ENCODE measurements at regions of chr15 and their contacts with region 1.

Region 1: GRCh38 chr15:62742409-62743171 is 300.0 kb upstream of the TPM1 start:
- DNase-seq: peak; percentile 71
- H3K27ac ChIP-seq: peak overlapping the region; percentile 80
- CTCF ChIP-seq: peak; percentile 97

Region 2: GRCh38 chr15:62758126-62758951 is 15.7 kb after region 1 on chr15:
- CTCF ChIA-PET with region 1: interaction called, 21 read pairs
- POLR2A ChIA-PET with region 1: no interaction called
- DNase-seq: peak; percentile 82
- H3K27ac ChIP-seq: peak overlapping the region; percentile 81
- CTCF ChIP-seq: no peak

Region 3: GRCh38 chr15:62779036-62779775 is 36.6 kb after region 1 on chr15:
- CTCF ChIA-PET with region 1: no interaction called
- POLR2A ChIA-PET with region 1: no interaction called
- DNase-seq: no peak
- H3K27ac ChIP-seq: no peak overlapping the region
- CTCF ChIP-seq: no peak

Measured in RWPE1 (cell line).